Activated CD8-positive, alpha-beta T cell treated with anti-CD3 and anti-CD28 coated beads, Interleukin-2, amount 10 ng/mL, durations not matched to agents 7 days and 5 days (primary cell): ENCODE measurements at regions of chr6 and their contacts with region 1.

Region 1: GRCh38 chr6:34610819-34611477 is 54.8 kb upstream of the SPDEF start:
- DNase-seq: no peak
- ATAC-seq: no peak
- H3K4me3 Mint-ChIP-seq: no peak overlapping the region
- H3K27ac Mint-ChIP-seq: no peak overlapping the region
- H3K4me1 Mint-ChIP-seq: peaks cover 14% of the 10 kb centered on the region
- H3K27me3 Mint-ChIP-seq: no peaks in the 10 kb centered on the region

Region 2: GRCh38 chr6:34459899-34460593 is 150.9 kb before region 1 on chr6:
- CTCF ChIA-PET with region 1: interaction called, 106 read pairs
- POLR2A ChIA-PET with region 1: interaction called, 3 read pairs
- DNase-seq: peak; percentile 67
- ATAC-seq: peak; percentile 65
- H3K4me3 Mint-ChIP-seq: no peak overlapping the region
- H3K27ac Mint-ChIP-seq: no peak overlapping the region
- H3K4me1 Mint-ChIP-seq: peaks cover 1% of the 10 kb centered on the region
- H3K27me3 Mint-ChIP-seq: peaks cover 18% of the 10 kb centered on the region

Region 3: GRCh38 chr6:34526992-34527728 is 83.8 kb before region 1 on chr6:
- CTCF ChIA-PET with region 1: interaction called, 26 read pairs
- POLR2A ChIA-PET with region 1: no interaction called
- DNase-seq: peak; percentile 97
- ATAC-seq: peak; percentile 98
- H3K4me3 Mint-ChIP-seq: peak overlapping the region; percentile 13
- H3K27ac Mint-ChIP-seq: peak overlapping the region; percentile 53
- H3K4me1 Mint-ChIP-seq: peaks cover 7% of the 10 kb centered on the region
- H3K27me3 Mint-ChIP-seq: no peaks in the 10 kb centered on the region

Region 4: GRCh38 chr6:34595332-34596184 is 15.4 kb before region 1 on chr6:
- CTCF ChIA-PET with region 1: interaction called, 20 read pairs
- POLR2A ChIA-PET with region 1: no interaction called
- DNase-seq: no peak
- ATAC-seq: no peak
- H3K4me3 Mint-ChIP-seq: no peak overlapping the region
- H3K27ac Mint-ChIP-seq: no peak overlapping the region
- H3K4me1 Mint-ChIP-seq: peaks cover 12% of the 10 kb centered on the region
- H3K27me3 Mint-ChIP-seq: no peaks in the 10 kb centered on the region